Naive thymus-derived CD4-positive, alpha-beta T cell (primary cell): ENCODE measurements at regions of chr5 and their contacts with region 1.

Region 1: DNA sequence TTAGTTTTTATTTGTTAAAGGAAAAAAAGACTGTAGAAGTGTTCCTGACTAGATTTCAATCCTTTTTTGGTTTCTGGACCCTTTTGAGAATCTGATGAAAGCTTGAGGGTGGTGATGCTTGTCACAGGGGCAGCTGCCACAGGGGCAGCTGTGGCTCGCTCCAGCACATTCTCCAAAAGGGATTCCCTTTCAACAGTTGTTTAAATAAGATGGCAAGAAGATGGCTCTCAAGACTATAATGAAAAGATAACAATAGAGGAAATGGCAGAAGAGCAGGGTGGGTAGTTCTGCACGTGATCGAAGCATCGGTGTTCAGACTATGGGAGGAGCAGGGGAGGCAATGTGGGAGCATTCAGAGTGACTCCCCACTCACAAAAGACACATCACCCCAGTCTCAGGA is 46.5 kb upstream of the TNFAIP8 start:
- DNase-seq: no peak
- ATAC-seq: peak; percentile 24
- H3K4me3 ChIP-seq: peak overlapping the region; percentile 31
- H3K4me3 Mint-ChIP-seq: peak overlapping the region; percentile 71 to 90 (median 83)
- H3K27ac ChIP-seq: peak overlapping the region; percentile 64
- H3K27ac Mint-ChIP-seq: peak overlapping the region; percentile 92 to 99 (median 97)
- H3K4me1 ChIP-seq: peaks cover 86 to 94% of the 10 kb centered on the region in 2 donors
- H3K4me1 Mint-ChIP-seq: peaks cover 55 to 99% (median 95%) of the 10 kb centered on the region in 7 donors
- H3K27me3 ChIP-seq: no peaks in the 10 kb centered on the region
- H3K27me3 Mint-ChIP-seq: no peaks in the 10 kb centered on the region

Region 2: GRCh38 chr5:119031905-119032304 is 277.4 kb before region 1 on chr5:
- CTCF ChIA-PET with region 1: no interaction called
- POLR2A ChIA-PET with region 1: no interaction called
- intact Hi-C with region 1: loop called in 1 of 2 experiments (anchors 2 kb)
- DNase-seq: no peak
- ATAC-seq: no peak
- H3K4me3 ChIP-seq: no peak overlapping the region
- H3K4me3 Mint-ChIP-seq: peak overlapping the region in 8 of 10 donors; percentile 1 to 78 (median 44)
- H3K27ac ChIP-seq: peak overlapping the region; percentile 49
- H3K27ac Mint-ChIP-seq: peak overlapping the region; percentile 45 to 92 (median 84)
- H3K4me1 ChIP-seq: peaks cover 0 to 18% of the 10 kb centered on the region in 2 donors
- H3K4me1 Mint-ChIP-seq: peaks cover 0 to 24% (median 22%) of the 10 kb centered on the region in 7 donors
- H3K27me3 ChIP-seq: no peaks in the 10 kb centered on the region
- H3K27me3 Mint-ChIP-seq: no peaks in the 10 kb centered on the region

Region 3: DNA sequence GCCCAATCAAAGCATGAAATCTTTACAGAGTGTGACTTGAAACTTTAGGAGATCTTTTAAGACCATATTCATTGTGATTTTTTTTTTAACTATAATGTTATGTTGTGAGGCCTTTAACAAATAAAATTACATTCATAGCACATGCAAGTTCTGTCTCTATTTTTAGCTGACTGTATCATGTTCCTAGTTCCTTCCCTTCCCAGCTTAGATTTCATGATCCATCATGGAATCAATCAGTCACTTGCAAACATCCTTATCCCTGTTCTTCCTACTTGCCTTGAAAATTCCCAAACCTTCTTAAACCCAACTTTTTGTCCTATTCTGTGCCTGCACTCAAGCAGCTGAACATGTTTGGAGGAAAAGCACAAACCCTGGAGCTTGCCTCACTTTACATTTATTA is 96.7 kb before region 1 on chr5:
- CTCF ChIA-PET with region 1: no interaction called
- POLR2A ChIA-PET with region 1: no interaction called
- intact Hi-C with region 1: no loop called
- DNase-seq: no peak
- ATAC-seq: no peak
- H3K4me3 ChIP-seq: no peak overlapping the region
- H3K4me3 Mint-ChIP-seq: no peak overlapping the region
- H3K27ac ChIP-seq: no peak overlapping the region
- H3K27ac Mint-ChIP-seq: no peak overlapping the region
- H3K4me1 ChIP-seq: no peaks in the 10 kb centered on the region
- H3K4me1 Mint-ChIP-seq: peaks cover 0 to 10% (median 2%) of the 10 kb centered on the region in 7 donors
- H3K27me3 ChIP-seq: no peaks in the 10 kb centered on the region
- H3K27me3 Mint-ChIP-seq: no peaks in the 10 kb centered on the region

Region 4: GRCh38 chr5:119238265-119239118 is 70.8 kb before region 1 on chr5:
- CTCF ChIA-PET with region 1: no interaction called
- POLR2A ChIA-PET with region 1: interaction called, 3 read pairs
- intact Hi-C with region 1: loop called in 1 of 2 experiments (anchors 2 kb)
- DNase-seq: peak in 6 of 9 donors; percentile 10 to 66 (median 56)
- ATAC-seq: peak; percentile 81
- H3K4me3 ChIP-seq: peak overlapping the region; percentile 2
- H3K4me3 Mint-ChIP-seq: peak overlapping the region; percentile 13 to 82 (median 66)
- H3K27ac ChIP-seq: peak overlapping the region; percentile 67
- H3K27ac Mint-ChIP-seq: peak overlapping the region in 8 of 9 donors; percentile 85 to 94 (median 90)
- H3K4me1 ChIP-seq: peaks cover 0 to 17% of the 10 kb centered on the region in 2 donors
- H3K4me1 Mint-ChIP-seq: peaks cover 7 to 57% (median 47%) of the 10 kb centered on the region in 7 donors
- H3K27me3 ChIP-seq: no peaks in the 10 kb centered on the region
- H3K27me3 Mint-ChIP-seq: no peaks in the 10 kb centered on the region

Region 5: GRCh38 chr5:119280380-119280779 is 28.9 kb before region 1 on chr5:
- CTCF ChIA-PET with region 1: interaction called, 4 read pairs
- POLR2A ChIA-PET with region 1: interaction called, 466 read pairs
- intact Hi-C with region 1: loop called in 1 of 2 experiments (anchors 2 kb)
- DNase-seq: no peak
- ATAC-seq: no peak
- H3K4me3 ChIP-seq: peak overlapping the region; percentile 31
- H3K4me3 Mint-ChIP-seq: peak overlapping the region; percentile 2 to 97 (median 80)
- H3K27ac ChIP-seq: peak overlapping the region; percentile 66
- H3K27ac Mint-ChIP-seq: peak overlapping the region; percentile 19 to 100 (median 96)
- H3K4me1 ChIP-seq: peaks cover 95% of the 10 kb centered on the region in 2 donors
- H3K4me1 Mint-ChIP-seq: peaks cover 85 to 100% (median 99%) of the 10 kb centered on the region in 7 donors
- H3K27me3 ChIP-seq: no peaks in the 10 kb centered on the region
- H3K27me3 Mint-ChIP-seq: peaks cover 0 to 2% (median 0%) of the 10 kb centered on the region in 5 donors

Region 6: GRCh38 chr5:119328753-119329602 is 19.7 kb after region 1 on chr5:
- CTCF ChIA-PET with region 1: interaction called, 47 read pairs
- POLR2A ChIA-PET with region 1: interaction called, 35 read pairs
- intact Hi-C with region 1: loop called in 1 of 2 experiments (anchors 1 kb)
- DNase-seq: peak in 4 of 9 donors; percentile 30 to 71 (median 37)
- ATAC-seq: peak; percentile 59
- H3K4me3 ChIP-seq: peak overlapping the region; percentile 40
- H3K4me3 Mint-ChIP-seq: peak overlapping the region; percentile 73 to 97 (median 81)
- H3K27ac ChIP-seq: peak overlapping the region; percentile 78
- H3K27ac Mint-ChIP-seq: peak overlapping the region; percentile 84 to 99 (median 95)
- H3K4me1 ChIP-seq: peaks cover 72 to 86% of the 10 kb centered on the region in 2 donors
- H3K4me1 Mint-ChIP-seq: peaks cover 63 to 98% (median 90%) of the 10 kb centered on the region in 7 donors
- H3K27me3 ChIP-seq: no peaks in the 10 kb centered on the region
- H3K27me3 Mint-ChIP-seq: no peaks in the 10 kb centered on the region

Region 7: GRCh38 chr5:119897537-119898370 is 588.4 kb after region 1 on chr5:
- CTCF ChIA-PET with region 1: no interaction called
- POLR2A ChIA-PET with region 1: no interaction called
- intact Hi-C with region 1: no loop called
- DNase-seq: no peak
- ATAC-seq: no peak
- H3K4me3 ChIP-seq: no peak overlapping the region
- H3K4me3 Mint-ChIP-seq: no peak overlapping the region
- H3K27ac ChIP-seq: no peak overlapping the region
- H3K27ac Mint-ChIP-seq: no peak overlapping the region
- H3K4me1 ChIP-seq: no peaks in the 10 kb centered on the region
- H3K4me1 Mint-ChIP-seq: peaks cover 0 to under 1% (median 0%) of the 10 kb centered on the region in 7 donors
- H3K27me3 ChIP-seq: no peaks in the 10 kb centered on the region
- H3K27me3 Mint-ChIP-seq: no peaks in the 10 kb centered on the region